Left ventricle myocardium superior (tissue), 1 donor: ENCODE measurements at regions of chr4 and their contacts with region 1.

Region 1: GRCh38 chr4:105471566-105472176 is 2.2 kb downstream of the PPA2 start:
- DNase-seq: no peak
- ATAC-seq: peak; percentile 46

Region 2: DNA sequence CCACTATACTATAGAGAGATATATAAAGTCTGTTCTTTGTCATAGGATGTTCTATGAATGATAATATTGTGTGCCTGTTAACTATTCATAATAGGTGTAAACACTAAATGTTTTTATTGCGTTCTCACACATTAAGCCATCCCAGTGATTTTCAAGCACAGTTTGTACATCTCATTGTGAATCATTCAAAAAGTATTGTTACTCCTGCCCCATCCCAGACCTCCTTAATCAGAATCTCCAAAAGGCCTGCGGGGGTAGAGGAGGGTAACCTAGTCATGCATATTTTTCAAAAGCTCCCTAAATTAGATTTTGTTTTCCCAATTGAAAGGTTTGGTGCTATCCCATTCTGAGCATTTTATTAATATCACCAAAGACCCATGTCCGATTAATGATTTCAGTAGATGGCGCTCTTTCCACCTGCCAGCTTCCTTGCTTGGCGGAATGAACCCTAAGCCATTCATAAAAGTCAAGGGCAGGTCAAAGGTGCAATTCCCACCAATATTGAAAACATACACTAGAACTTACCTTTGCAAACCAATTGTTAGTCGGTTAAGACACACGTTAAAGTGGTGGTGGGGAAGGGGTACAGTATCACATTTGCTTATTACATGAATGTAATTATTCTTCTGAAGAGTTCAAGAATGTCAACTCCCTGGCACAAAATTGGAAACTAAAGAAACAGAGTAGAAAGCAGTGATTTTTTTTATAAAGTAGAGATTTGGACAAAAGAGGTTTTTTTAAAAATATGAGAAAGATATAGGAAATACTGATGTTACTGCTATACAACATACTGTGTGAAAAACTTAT is 330.8 kb before region 1 on chr4:
- intact Hi-C with region 1: loop called (anchors 2 kb)
- DNase-seq: no peak
- ATAC-seq: peak; percentile 75

Region 3: DNA sequence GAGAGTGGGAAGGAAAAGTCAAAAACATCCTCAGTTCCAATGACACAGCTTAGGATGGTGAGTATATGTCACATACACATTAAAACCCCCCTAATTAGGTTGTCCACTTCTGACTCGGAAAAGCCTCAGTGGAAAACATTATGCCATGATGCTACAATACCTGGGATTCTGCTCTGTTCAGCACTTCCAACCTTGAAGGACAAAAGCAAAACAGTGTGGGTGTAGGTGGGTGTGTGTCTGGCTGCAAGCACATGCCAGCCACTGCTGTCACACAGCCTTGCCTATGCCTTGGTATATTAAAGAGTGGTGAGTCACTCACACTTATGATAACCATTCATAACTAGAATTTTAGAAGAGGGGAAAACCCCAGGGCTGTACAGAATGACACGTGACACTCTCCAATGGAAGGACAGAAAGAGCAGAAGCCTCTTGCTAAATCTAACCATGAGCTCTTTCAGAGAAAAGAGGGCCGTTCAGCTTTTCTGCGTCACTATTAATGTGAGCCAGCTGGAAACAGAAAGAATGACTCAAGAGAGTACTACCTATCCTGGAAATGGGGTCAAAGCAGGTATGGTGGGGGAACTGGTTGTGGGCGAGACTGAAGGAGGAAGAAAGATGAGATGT is 165.4 kb before region 1 on chr4:
- intact Hi-C with region 1: no loop called
- DNase-seq: peak; percentile 23
- ATAC-seq: peak; percentile 81

Region 4: GRCh38 chr4:105708530-105709391 is 237.1 kb after region 1 on chr4 and contains the starts of genes GSTCD and INTS12:
- intact Hi-C with region 1: no loop called
- DNase-seq: peak; percentile 92
- ATAC-seq: peak; percentile 99
- total RNA-seq, gene GSTCD: 4.4 TPM
- total RNA-seq, gene INTS12: 24.7 TPM

Region 5: DNA sequence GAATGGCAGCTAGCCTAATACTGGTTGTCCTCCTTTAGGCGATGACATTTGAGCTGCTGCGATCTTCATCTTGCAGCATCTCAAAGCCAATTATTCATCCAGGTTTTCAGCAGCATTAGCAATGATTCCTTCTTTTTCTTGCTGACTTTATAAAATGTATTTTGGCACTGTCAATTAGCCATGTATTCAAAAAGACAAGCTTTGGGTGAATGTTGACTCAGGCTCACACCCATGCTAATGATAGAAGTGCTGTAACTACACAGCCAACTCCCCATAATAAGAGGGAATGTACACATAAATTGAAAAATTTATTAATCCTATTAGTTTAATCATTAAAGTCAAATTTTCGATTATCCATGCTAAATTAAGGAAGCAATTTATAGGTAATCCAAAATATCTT is 399.3 kb after region 1 on chr4:
- intact Hi-C with region 1: no loop called
- DNase-seq: no peak
- ATAC-seq: no peak